Activated CD4-positive, alpha-beta T cell treated with anti-CD3 and anti-CD28 coated beads, Interleukin-2, amount 10 ng/mL, durations not matched to agents 24 days and 14 days (primary cell): ENCODE measurements at regions of chr22 and their contacts with region 1.

Region 1: DNA sequence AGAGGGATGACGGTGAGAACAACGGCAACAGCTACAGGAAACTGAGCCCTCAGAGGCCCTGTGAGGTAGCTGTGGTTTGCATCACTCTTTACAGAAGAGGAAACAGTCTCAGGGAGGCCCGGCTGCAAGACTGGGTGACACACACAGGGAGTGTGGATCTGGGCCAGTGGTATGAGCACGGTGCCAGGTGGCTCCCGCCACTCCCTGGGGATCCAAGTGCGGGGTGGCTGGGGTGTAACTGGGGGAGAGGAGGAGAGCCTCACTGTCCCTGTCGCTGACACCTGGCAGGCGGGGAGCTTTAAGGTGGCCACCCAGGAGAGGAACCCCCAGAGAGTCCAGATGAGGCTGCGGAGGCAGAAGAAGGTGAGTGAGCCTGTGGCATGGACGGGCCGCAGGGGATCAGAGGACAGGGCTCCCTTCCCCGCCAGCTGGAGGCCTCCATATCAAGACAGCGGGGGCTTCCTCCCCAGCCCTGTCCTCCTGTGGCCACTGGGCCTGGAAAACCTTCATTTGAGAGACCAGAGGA is 5.6 kb downstream of the RGL4 start:
- DNase-seq: peak; percentile 94
- H3K4me3 Mint-ChIP-seq: peak overlapping the region; percentile 95
- H3K27ac Mint-ChIP-seq: peak overlapping the region; percentile 100
- H3K4me1 Mint-ChIP-seq: peaks cover 44% of the 10 kb centered on the region
- H3K27me3 Mint-ChIP-seq: no peaks in the 10 kb centered on the region

Region 2: DNA sequence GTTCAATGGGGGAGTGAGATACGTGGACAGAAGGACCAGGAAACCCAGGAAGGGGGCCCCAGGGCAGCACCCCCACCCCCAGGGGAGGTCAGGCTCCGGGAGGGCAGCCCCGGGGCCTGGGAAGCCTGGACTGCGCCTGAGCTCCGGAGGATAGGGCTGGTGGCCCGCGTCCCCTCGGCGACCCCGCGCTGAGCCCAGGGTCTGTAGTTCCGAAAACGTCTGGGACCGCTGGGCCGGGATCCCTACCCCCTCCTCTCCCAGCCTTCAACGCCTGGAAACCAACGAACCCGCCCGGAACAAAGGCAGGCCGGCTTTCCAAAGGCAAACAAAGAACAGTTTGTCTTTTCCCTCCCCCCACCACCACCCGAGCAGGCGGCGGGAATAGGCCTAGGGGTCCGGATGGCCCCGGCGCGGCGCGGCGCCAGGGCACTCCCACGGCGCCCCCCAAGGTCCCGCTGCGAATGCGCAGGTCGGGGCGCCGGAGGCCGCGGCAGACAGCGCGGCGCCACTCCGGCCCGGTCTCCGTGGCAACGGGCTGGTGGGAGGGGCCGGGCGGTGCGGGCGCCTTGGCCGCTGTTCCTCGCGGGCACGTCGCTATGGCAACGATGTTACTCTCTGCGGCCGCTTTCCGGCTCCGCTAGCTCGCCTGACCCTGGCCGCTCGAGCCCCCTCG is 174.8 kb before region 1 on chr22:
- intact Hi-C with region 1: no loop called
- DNase-seq: peak; percentile 90
- H3K4me3 Mint-ChIP-seq: peak overlapping the region; percentile 56
- H3K27ac Mint-ChIP-seq: no peak overlapping the region
- H3K4me1 Mint-ChIP-seq: peaks cover 2% of the 10 kb centered on the region
- H3K27me3 Mint-ChIP-seq: peaks cover 38% of the 10 kb centered on the region

Region 3: DNA sequence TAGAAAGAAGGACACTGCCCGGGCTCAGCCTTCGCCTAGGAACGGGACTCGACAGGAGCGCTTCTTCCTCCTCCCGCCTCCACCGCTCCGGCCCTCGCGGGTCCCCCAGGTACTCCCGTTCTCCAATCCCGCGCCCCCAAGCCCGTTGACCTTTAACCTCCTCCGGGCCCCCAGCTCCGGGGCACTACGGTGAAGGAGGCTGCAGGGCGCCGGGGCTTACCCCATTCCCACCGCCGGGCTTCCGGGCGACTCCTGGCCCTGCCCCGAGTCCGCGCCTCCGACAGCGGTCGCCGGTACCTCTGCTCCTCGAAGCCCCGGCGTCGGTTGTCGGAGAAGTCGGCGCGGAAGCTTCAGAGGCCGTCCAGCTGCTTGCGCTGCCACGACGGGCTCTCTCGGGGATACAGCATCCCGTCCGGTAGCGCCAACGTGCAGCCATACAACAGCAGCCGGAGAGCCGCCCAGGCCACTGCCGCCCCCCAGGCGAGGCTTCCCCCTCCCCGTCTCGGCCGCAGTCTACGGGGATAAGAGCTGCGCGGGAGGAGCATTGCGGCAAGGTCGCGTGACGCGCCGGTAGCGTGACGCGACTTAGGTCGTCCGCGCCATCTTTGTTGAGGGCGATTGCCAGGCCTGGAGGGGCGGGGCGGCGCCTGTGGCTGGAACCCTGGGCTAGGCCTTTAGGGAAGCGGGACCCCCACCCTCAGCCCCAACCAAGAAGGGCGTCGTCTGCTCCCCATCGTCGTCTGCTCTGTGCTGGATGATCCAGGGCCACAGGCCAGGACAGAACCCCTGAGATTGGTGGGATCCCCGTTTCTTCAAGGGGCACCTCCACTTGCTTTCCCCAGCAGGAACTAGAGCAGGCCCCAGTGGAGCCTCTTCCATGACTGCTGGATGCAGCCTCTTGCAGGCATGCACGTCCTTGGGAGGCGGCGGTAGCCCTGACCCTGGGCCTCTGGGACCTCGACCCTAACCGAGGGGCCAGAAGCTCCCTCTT is 20.7 kb after region 1 on chr22:
- intact Hi-C with region 1: loop called (anchors 2 kb)
- DNase-seq: peak; percentile 96
- H3K4me3 Mint-ChIP-seq: peak overlapping the region; percentile 80
- H3K27ac Mint-ChIP-seq: peak overlapping the region; percentile 87
- H3K4me1 Mint-ChIP-seq: peaks cover 14% of the 10 kb centered on the region
- H3K27me3 Mint-ChIP-seq: no peaks in the 10 kb centered on the region

Region 4: DNA sequence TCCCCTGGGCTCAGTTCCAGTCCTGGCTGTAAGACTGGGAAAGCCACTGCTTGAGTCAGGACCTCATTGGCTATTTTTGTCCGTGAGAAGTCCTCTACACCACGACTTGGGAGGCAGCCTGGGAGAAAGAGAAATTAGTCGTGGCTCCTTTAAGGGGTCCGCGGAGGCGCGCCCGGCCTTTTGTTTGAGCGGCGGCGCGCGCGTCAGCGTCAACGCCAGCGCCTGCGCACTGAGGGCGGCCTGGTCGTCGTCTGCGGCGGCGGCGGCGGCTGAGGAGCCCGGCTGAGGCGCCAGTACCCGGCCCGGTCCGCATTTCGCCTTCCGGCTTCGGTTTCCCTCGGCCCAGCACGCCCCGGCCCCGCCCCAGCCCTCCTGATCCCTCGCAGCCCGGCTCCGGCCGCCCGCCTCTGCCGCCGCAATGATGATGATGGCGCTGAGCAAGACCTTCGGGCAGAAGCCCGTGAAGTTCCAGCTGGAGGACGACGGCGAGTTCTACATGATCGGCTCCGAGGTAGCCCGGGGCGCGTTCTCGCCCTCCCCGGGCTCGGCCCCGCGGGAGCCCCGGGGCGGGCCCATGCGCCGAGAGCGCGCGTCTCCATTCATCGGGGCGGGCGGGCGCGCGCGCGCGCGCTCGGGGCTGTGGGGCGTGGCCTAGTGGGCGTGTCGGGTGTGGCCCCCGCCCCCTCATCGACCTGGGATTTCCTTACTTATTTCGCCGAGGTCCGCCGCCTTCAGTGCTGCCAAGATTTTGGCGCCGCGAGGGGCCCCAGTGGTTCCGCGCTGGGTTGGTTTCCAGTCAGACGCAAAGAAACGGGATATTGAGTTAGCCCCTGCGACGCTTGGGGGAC is 90.6 kb after region 1 on chr22 and contains the start of gene SMARCB1:
- intact Hi-C with region 1: no loop called
- DNase-seq: peak; percentile 96
- H3K4me3 Mint-ChIP-seq: peak within 1 kb of the TSS; percentile 88
- H3K27ac Mint-ChIP-seq: peak within 1 kb of the TSS; percentile 95
- H3K4me1 Mint-ChIP-seq: peaks cover 28% of the 10 kb centered on the region
- H3K27me3 Mint-ChIP-seq: no peaks in the 10 kb centered on the region
- total RNA-seq, gene SMARCB1: 89.9 and 92.2 TPM in 2 replicates